ENCODE measurements at regions of chr16 and their contacts with region 1.

Region 1: GRCh38 chr16:58187665-58188421 is 10.1 kb downstream of the CSNK2A2 start:
- DNase-seq: no peak
- ATAC-seq: no peak
- H3K4me3 ChIP-seq: no peak overlapping the region
- H3K27ac ChIP-seq: no peak overlapping the region
- H3K4me1 ChIP-seq: no peaks in the 10 kb centered on the region
- H3K27me3 ChIP-seq: no peaks in the 10 kb centered on the region
- CTCF ChIP-seq: no peak
- POLR2A ChIP-seq: no peak
- RAD21 ChIP-seq: no peak

Region 2: DNA sequence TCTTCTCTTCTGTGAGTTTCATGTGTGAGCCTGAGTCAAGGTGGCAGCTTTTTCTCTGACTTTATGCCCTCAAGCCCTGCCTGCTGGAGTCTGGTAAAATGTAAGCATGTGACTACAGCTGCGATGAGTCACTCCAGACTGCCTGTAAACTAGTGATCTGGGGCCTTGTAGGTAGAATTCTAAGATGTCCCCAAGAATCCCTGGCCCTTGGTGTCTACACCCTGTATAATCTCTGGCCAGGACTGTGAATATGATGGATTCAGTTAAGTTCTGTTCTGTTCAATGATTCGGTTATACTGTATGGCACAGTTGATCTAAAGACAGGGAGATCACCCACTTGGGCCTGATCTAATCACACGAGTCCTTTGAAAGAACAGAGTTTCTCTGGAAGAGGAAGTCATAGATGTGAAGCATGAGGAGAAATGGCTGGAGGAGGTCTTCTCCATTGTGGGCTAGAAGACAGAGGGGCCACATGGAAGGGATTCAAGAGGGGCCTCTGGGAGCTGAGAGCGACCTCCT is 77.2 kb after region 1 on chr16:
- CTCF ChIA-PET with region 1: no interaction called
- POLR2A ChIA-PET with region 1: no interaction called
- dilution Hi-C with region 1: no loop called
- in situ Hi-C with region 1: no loop called
- intact Hi-C with region 1: no loop called
- DNase-seq: peak; percentile 84
- ATAC-seq: peak; percentile 96
- H3K4me3 ChIP-seq: no peak overlapping the region
- H3K27ac ChIP-seq: peak overlapping the region; percentile 32; the same call in 1 of the 2 replicates
- H3K4me1 ChIP-seq: peaks cover 14% of the 10 kb centered on the region; the same call in 1 of the 2 replicates
- H3K27me3 ChIP-seq: no peaks in the 10 kb centered on the region; the same call in 1 of the 2 replicates
- CTCF ChIP-seq: no peak
- POLR2A ChIP-seq: no peak
- RAD21 ChIP-seq: no peak

Region 3: DNA sequence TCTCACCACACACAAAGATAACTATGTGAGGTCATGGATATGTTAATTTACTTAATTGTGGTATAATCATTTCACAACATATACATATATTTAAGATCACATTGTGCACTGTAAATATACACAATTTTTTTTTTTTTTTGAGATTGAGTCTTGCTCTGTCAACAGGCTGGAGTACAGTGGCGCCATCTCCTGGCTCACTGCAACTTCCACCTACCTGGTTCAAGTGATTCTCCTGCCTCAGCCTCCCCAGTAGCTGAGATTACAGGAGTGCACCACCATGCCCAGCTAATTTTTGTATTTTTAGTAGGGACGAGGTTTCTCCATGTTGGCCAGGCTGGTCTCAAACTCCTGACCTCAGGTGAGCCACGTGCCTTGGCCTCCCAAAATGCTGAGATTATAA is 118.5 kb after region 1 on chr16:
- CTCF ChIA-PET with region 1: no interaction called
- POLR2A ChIA-PET with region 1: no interaction called
- dilution Hi-C with region 1: no loop called
- in situ Hi-C with region 1: no loop called
- intact Hi-C with region 1: loop called (anchors 2 kb)
- DNase-seq: peak; percentile 24
- ATAC-seq: no peak
- H3K4me3 ChIP-seq: no peak overlapping the region
- H3K27ac ChIP-seq: no peak overlapping the region
- H3K4me1 ChIP-seq: no peaks in the 10 kb centered on the region
- H3K27me3 ChIP-seq: no peaks in the 10 kb centered on the region
- CTCF ChIP-seq: peak; percentile 37
- POLR2A ChIP-seq: no peak
- RAD21 ChIP-seq: peak; percentile 32

Measured in IMR-90 (cell line).